HepG2 (cell line): ENCODE measurements at regions of chr9 and their contacts with region 1.

Region 1: GRCh38 chr9:128733256-128733655 is 9.3 kb upstream of the ZDHHC12 start:
- DNase-seq: peak; percentile 91
- ATAC-seq: peak; percentile 91
- H3K4me3 ChIP-seq: peak overlapping the region in 1 of 3 experiments; percentile 32; a peak in 1 of 6 replicates
- H3K27ac ChIP-seq: peak overlapping the region; percentile 14
- H3K4me1 ChIP-seq: peaks cover 14% of the 10 kb centered on the region
- H3K27me3 ChIP-seq: no peaks in the 10 kb centered on the region
- CTCF ChIP-seq: peak; percentile 94
- EP300 ChIP-seq: no peak
- POLR2A ChIP-seq: no peak
- RAD21 ChIP-seq: peak; percentile 90

Region 2: DNA sequence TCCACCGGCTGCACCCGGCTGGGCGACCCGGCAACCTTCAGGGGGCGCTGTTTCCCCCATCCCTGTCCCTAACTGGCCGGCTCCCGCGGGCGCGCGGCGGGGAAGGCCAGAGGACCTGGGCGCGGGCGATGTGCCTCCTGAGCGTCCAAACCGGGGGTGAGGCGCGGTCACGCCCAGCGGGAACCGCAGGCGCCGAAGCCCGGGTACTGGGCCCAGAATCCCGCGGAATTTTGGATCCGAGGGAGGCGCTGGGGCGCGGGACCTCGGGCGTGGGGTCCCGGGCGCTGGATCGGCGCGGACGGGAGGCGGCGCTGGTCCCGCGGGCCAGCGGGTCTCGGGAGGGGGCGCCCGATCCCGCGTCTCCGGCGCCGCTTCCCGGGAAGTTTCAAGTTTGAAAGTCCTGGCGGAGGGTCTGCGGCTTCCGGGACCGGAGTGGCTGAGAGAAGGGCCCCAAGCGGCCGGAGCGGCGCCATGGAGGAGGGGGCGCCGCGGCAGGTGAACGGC is 30.8 kb before region 1 on chr9 and contains the start of gene PKN3:
- CTCF ChIA-PET with region 1: interaction called, 17 read pairs
- POLR2A ChIA-PET with region 1: no interaction called
- in situ Hi-C with region 1: no loop called
- intact Hi-C with region 1: no loop called
- DNase-seq: peak; percentile 74
- ATAC-seq: peak; percentile 87
- H3K4me3 ChIP-seq: peak within 1 kb of the TSS; percentile 89 to 97 (median 92)
- H3K27ac ChIP-seq: peak within 1 kb of the TSS; percentile 85
- H3K4me1 ChIP-seq: peaks cover 13% of the 10 kb centered on the region
- H3K27me3 ChIP-seq: no peaks in the 10 kb centered on the region
- CTCF ChIP-seq: peak; percentile 91
- EP300 ChIP-seq: no peak
- POLR2A ChIP-seq: peak in 1 of 2 experiments; percentile 43; a peak in 1 of 4 replicates
- RAD21 ChIP-seq: peak; percentile 78
- total RNA-seq, gene PKN3: 8.3 and 13.2 TPM in 2 replicates

Region 3: GRCh38 chr9:128771745-128772519 is 38.7 kb after region 1 on chr9 and contains the start of gene ZER1:
- CTCF ChIA-PET with region 1: interaction called, 4 read pairs
- POLR2A ChIA-PET with region 1: no interaction called
- in situ Hi-C with region 1: no loop called
- intact Hi-C with region 1: loop called (anchors 2 kb)
- DNase-seq: peak; percentile 67
- ATAC-seq: peak; percentile 95
- H3K4me3 ChIP-seq: peak within 1 kb of the TSS; percentile 80 to 99 (median 96)
- H3K27ac ChIP-seq: peak within 1 kb of the TSS; percentile 68
- H3K4me1 ChIP-seq: peaks cover 19% of the 10 kb centered on the region
- H3K27me3 ChIP-seq: no peaks in the 10 kb centered on the region; a peak in 1 of 5 replicates
- CTCF ChIP-seq: peak; percentile 36; the same call in 1 of the 2 replicates
- EP300 ChIP-seq: peak; percentile 40 to 59; a peak in 2 of 4 replicates
- POLR2A ChIP-seq: peak; percentile 27 to 47; a peak in 3 of 4 replicates
- RAD21 ChIP-seq: peak; percentile 84
- total RNA-seq, gene ZER1: 7.7 and 9.1 TPM in 2 replicates

Region 4: DNA sequence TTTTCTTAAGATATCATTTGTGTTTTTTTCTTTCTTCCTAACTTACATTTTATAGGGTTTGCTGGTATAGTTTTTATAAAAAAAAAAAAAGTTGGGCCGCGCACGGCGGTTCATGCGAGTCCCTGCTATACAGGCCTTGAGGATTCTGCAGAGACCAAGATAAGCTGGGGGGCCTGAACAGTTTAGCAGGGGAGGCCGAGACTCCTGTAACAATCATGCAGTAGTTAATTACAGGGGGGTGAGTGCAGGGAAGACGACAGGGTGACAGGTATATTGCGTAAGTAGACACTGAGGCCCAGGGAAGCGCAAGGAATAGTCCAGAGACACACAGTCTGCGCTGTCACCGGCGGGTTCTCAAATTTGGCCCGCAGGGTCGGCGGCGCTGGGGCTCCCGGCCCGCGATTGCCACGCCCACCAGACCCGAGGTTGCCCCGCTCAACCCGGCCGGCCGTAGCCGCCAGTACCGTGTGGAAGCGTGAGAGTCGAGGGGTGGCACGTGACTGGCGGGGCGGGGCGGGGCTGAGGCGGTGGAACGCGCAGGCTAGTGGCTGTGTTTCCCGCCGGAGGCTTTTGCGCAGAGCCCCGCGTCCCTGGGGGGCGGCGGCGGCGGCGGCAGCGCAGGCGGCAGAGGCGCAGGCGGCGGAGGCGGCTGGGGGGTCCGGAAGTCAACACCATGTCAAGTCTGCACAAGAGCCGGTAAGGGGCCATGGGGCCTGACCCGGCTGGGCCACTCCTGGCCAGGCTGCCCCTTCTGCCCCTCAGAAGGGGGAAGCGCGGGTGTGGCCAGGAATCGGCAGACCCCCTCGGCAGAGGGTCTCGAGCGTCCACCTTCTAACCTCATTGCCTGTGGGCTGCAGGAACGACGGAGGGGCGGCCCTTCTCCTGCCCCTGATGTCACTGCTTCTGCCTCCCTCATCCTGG is 53.7 kb after region 1 on chr9 and contains the start of gene TBC1D13:
- CTCF ChIA-PET with region 1: interaction called, 4 read pairs
- POLR2A ChIA-PET with region 1: no interaction called
- in situ Hi-C with region 1: no loop called
- intact Hi-C with region 1: loop called (anchors 1 kb)
- DNase-seq: peak; percentile 75
- ATAC-seq: peak; percentile 96
- H3K4me3 ChIP-seq: peak within 1 kb of the TSS; percentile 78 to 94 (median 78)
- H3K27ac ChIP-seq: peak within 1 kb of the TSS; percentile 52
- H3K4me1 ChIP-seq: peaks cover 26% of the 10 kb centered on the region
- H3K27me3 ChIP-seq: no peaks in the 10 kb centered on the region; a peak in 1 of 5 replicates
- CTCF ChIP-seq: peak; percentile 29; the same call in 1 of the 2 replicates
- EP300 ChIP-seq: 0 out of 4 replicates have a peak, but pooled peaks of 1 of the 2 experiments have one; percentile 15
- POLR2A ChIP-seq: peak in 1 of 2 experiments; percentile 74; a peak in 2 of 4 replicates
- RAD21 ChIP-seq: peak; percentile 56
- total RNA-seq, gene TBC1D13: 17.9 and 18.4 TPM in 2 replicates